SK-N-SH (cell line): ENCODE measurements at regions of chr17 and their contacts with region 1.

Region 1: GRCh38 chr17:4625181-4625617 is 16.3 kb downstream of the ALOX15 start:
- DNase-seq: no peak
- H3K4me3 ChIP-seq: no peak overlapping the region
- H3K27ac ChIP-seq: no peak overlapping the region
- H3K4me1 ChIP-seq: no peaks in the 10 kb centered on the region
- H3K27me3 ChIP-seq: peaks cover 18% of the 10 kb centered on the region; the same call in 1 of the 2 replicates
- CTCF ChIP-seq: no peak
- EP300 ChIP-seq: no peak
- RAD21 ChIP-seq: no peak

Region 2: DNA sequence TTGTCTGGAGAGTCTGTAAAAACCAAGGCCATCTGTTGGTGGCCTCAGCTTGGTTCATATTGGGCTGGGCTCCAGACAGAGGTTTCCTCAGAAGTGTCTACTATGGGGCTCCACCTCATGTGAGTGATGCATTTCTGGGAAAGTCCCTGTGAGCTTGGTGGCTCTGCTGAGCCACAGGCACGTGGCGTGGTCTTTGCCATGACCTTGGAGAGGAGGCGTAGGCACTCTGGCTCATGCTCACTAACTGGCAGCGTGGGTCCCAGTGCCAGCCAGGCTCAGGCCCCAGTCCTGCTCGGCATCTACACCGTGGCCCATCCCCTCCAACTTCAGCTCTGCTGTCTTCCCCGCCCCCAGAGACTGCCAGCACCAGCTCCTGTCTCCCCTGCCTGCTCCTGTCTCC is 51.5 kb before region 1 on chr17:
- CTCF ChIA-PET with region 1: interaction called, 237 read pairs
- POLR2A ChIA-PET with region 1: no interaction called
- DNase-seq: no peak
- H3K4me3 ChIP-seq: no peak overlapping the region
- H3K27ac ChIP-seq: no peak overlapping the region
- H3K4me1 ChIP-seq: no peaks in the 10 kb centered on the region
- H3K27me3 ChIP-seq: peaks cover 24% of the 10 kb centered on the region; the same call in 1 of the 2 replicates
- CTCF ChIP-seq: no peak
- EP300 ChIP-seq: no peak
- RAD21 ChIP-seq: no peak

Region 3: GRCh38 chr17:4583782-4584100 is 41.5 kb before region 1 on chr17:
- CTCF ChIA-PET with region 1: interaction called, 22 read pairs
- POLR2A ChIA-PET with region 1: no interaction called
- DNase-seq: peak; percentile 79
- H3K4me3 ChIP-seq: no peak overlapping the region
- H3K27ac ChIP-seq: no peak overlapping the region
- H3K4me1 ChIP-seq: peaks cover 0 to 23% of the 10 kb centered on the region in 2 experiments; a peak in 1 of 4 replicates
- H3K27me3 ChIP-seq: peaks cover 61% of the 10 kb centered on the region
- CTCF ChIP-seq: peak; percentile 39
- EP300 ChIP-seq: no peak
- RAD21 ChIP-seq: no peak

Region 4: GRCh38 chr17:4594931-4595684 is 30.1 kb before region 1 on chr17:
- CTCF ChIA-PET with region 1: interaction called, 23 read pairs
- POLR2A ChIA-PET with region 1: no interaction called
- DNase-seq: peak; percentile 68
- H3K4me3 ChIP-seq: no peak overlapping the region
- H3K27ac ChIP-seq: no peak overlapping the region
- H3K4me1 ChIP-seq: peaks cover 0 to 16% of the 10 kb centered on the region in 2 experiments; a peak in 1 of 4 replicates
- H3K27me3 ChIP-seq: peaks cover 28% of the 10 kb centered on the region
- CTCF ChIP-seq: no peak; the same call in 1 of the 2 replicates
- EP300 ChIP-seq: no peak
- RAD21 ChIP-seq: no peak

Region 5: GRCh38 chr17:4607773-4608187 is 17.4 kb before region 1 on chr17:
- CTCF ChIA-PET with region 1: interaction called, 17 read pairs
- POLR2A ChIA-PET with region 1: interaction called, 3 read pairs
- DNase-seq: no peak
- H3K4me3 ChIP-seq: no peak overlapping the region
- H3K27ac ChIP-seq: no peak overlapping the region
- H3K4me1 ChIP-seq: peaks cover 0 to 9% of the 10 kb centered on the region in 2 experiments; a peak in 1 of 4 replicates
- H3K27me3 ChIP-seq: peaks cover 22% of the 10 kb centered on the region; the same call in 1 of the 2 replicates
- CTCF ChIP-seq: no peak
- EP300 ChIP-seq: no peak
- RAD21 ChIP-seq: no peak

Region 6: DNA sequence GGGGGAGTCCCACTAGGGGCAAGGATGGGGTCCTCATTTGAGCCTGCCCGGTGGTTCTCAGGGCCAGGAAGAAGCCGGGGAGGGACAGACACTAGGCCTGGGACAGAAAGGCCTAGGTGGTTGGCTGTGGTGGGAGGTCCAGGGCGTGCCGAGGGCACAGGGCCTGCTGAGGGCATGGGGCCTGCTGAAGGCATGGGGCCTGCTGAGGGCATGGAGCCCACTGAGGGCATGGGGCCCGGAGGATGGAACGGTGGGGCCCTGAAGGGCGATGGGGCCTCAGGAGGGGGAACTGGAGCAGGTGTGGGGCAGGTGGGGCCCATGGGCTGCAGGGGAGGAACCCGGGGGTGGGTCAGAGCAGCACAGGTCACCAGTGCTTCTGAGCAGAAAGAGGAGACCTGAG is 47.6 kb after region 1 on chr17:
- CTCF ChIA-PET with region 1: no interaction called
- POLR2A ChIA-PET with region 1: no interaction called
- DNase-seq: no peak
- H3K4me3 ChIP-seq: no peak overlapping the region
- H3K27ac ChIP-seq: no peak overlapping the region
- H3K4me1 ChIP-seq: no peaks in the 10 kb centered on the region
- H3K27me3 ChIP-seq: no peaks in the 10 kb centered on the region
- CTCF ChIP-seq: no peak
- EP300 ChIP-seq: no peak
- RAD21 ChIP-seq: no peak